T-cell (primary cell): ENCODE measurements at regions of chr4 and their contacts with region 1.

Region 1: GRCh38 chr4:153426207-153426885 is 39.8 kb upstream of the TMEM131L start:
- DNase-seq: peak in 13 of 35 experiments; percentile 7 to 71 (median 19)
- ATAC-seq: peak; percentile 75 to 93 (median 84)
- H3K4me3 ChIP-seq: peak overlapping the region in 1 of 2 donors; percentile 15
- H3K4me3 Mint-ChIP-seq: peak overlapping the region; percentile 28 to 65 (median 49)
- H3K27ac ChIP-seq: peak overlapping the region; percentile 85
- H3K27ac Mint-ChIP-seq: peak overlapping the region; percentile 87 to 95
- H3K4me1 ChIP-seq: peaks cover 41 to 49% of the 10 kb centered on the region in 2 experiments
- H3K4me1 Mint-ChIP-seq: peaks cover 53 to 63% (median 59%) of the 10 kb centered on the region in 3 donors
- H3K27me3 ChIP-seq: no peaks in the 10 kb centered on the region
- H3K27me3 Mint-ChIP-seq: no peaks in the 10 kb centered on the region

Region 2: DNA sequence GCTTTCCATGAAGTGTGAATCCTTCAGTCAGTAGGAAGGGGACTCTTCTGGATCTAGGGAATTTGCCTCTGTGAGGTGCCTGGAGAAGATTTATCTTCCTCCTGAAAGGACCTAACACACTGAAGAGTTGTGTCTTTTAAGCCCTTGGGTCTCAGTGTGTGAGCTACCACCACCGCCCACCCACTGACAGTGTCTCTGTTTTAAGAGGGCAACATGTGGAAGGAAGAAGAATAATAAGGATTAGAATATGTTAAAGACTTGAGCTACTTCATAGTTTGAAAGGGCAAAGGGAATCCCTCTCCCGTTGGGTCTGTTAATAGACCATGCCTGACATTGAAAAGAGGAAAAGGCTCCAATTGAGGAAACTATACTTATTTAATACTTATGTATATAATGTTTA is 193.5 kb after region 1 on chr4:
- CTCF ChIA-PET with region 1: no interaction called
- POLR2A ChIA-PET with region 1: interaction called in 1 of 2 experiments, 10 read pairs
- DNase-seq: no peak
- ATAC-seq: no peak
- H3K4me3 ChIP-seq: no peak overlapping the region
- H3K4me3 Mint-ChIP-seq: no peak overlapping the region
- H3K27ac ChIP-seq: no peak overlapping the region
- H3K27ac Mint-ChIP-seq: peak overlapping the region; percentile 70 to 74
- H3K4me1 ChIP-seq: peaks cover 0 to 6% of the 10 kb centered on the region in 2 experiments
- H3K4me1 Mint-ChIP-seq: peaks cover 6 to 28% (median 26%) of the 10 kb centered on the region in 3 donors
- H3K27me3 ChIP-seq: no peaks in the 10 kb centered on the region
- H3K27me3 Mint-ChIP-seq: no peaks in the 10 kb centered on the region